ENCODE measurements at regions of chr6 and their contacts with region 1.

Region 1: GRCh38 chr6:117674991-117675657 is at the start of gene NUS1:
- DNase-seq: peak; percentile 98
- ATAC-seq: peak; percentile 96
- H3K4me3 Mint-ChIP-seq: peak within 1 kb of the TSS; percentile 80
- H3K27ac Mint-ChIP-seq: peak within 1 kb of the TSS; percentile 92
- H3K4me1 Mint-ChIP-seq: peaks cover 46% of the 10 kb centered on the region
- H3K27me3 Mint-ChIP-seq: no peaks in the 10 kb centered on the region
- total RNA-seq, gene NUS1: 34.0 to 38.3 TPM

Region 2: DNA sequence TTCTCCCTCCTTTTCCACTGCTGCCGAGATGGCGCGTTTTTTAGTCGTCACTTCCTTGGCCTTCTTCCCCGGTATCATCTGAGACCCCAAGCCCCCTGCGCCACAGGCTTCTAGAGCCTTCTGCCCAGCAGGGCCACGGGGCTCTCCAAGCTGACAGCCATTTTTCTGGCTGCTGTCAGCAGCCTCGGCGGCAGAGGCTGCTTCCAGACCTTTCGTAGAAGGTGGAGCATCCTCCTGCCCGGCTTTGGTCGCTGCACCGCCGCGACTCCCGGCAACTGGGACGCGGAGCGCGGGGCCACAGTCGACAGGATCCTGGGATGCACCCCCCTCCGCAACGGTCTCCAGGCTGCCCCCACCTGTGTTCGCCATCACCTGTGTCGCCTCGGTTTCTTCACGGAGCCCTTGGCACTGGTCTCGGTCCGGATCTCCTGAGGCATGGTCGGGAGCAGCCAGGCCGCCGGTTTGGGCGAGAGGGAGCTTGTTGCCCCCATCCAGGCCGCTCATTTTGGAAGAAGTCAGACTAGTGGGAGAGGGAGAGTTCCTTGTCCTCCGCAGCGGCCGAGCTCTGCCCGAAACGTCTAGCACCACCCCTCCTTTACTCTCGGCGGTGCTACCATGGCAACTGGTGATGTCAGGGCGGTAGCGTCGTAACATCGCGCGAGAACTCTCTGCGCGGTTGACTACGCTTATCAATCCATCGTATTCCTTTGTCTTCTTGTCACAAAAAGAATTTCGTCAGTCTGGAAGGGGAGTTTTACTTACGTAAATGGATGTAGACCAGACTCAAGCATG is 1421.4 kb before region 1 on chr6 and contains the start of gene TSPYL4:
- CTCF ChIA-PET with region 1: no interaction called
- POLR2A ChIA-PET with region 1: no interaction called
- intact Hi-C with region 1: loop called in 1 of 2 experiments (anchors 10 kb)
- DNase-seq: peak; percentile 95
- ATAC-seq: peak; percentile 99
- H3K4me3 Mint-ChIP-seq: no peak within 1 kb of the TSS
- H3K27ac Mint-ChIP-seq: no peak within 1 kb of the TSS
- H3K4me1 Mint-ChIP-seq: peaks cover 19% of the 10 kb centered on the region
- H3K27me3 Mint-ChIP-seq: no peaks in the 10 kb centered on the region
- total RNA-seq, gene TSPYL4: 9.4 to 10.8 TPM

Region 3: GRCh38 chr6:116925088-116925794 is 749.9 kb before region 1 on chr6:
- CTCF ChIA-PET with region 1: no interaction called
- POLR2A ChIA-PET with region 1: no interaction called
- intact Hi-C with region 1: no loop called
- DNase-seq: no peak
- ATAC-seq: no peak
- H3K4me3 Mint-ChIP-seq: no peak overlapping the region
- H3K27ac Mint-ChIP-seq: no peak overlapping the region
- H3K4me1 Mint-ChIP-seq: no peaks in the 10 kb centered on the region
- H3K27me3 Mint-ChIP-seq: no peaks in the 10 kb centered on the region

Region 4: GRCh38 chr6:117547688-117548621 is 127.2 kb before region 1 on chr6:
- CTCF ChIA-PET with region 1: interaction called, 3 read pairs
- POLR2A ChIA-PET with region 1: no interaction called
- intact Hi-C with region 1: loop called in 1 of 2 experiments (anchors 5 kb)
- DNase-seq: peak; percentile 60
- ATAC-seq: peak; percentile 42
- H3K4me3 Mint-ChIP-seq: peak overlapping the region; percentile 67
- H3K27ac Mint-ChIP-seq: peak overlapping the region; percentile 62
- H3K4me1 Mint-ChIP-seq: peaks cover 39% of the 10 kb centered on the region
- H3K27me3 Mint-ChIP-seq: peaks cover 11% of the 10 kb centered on the region

Region 5: DNA sequence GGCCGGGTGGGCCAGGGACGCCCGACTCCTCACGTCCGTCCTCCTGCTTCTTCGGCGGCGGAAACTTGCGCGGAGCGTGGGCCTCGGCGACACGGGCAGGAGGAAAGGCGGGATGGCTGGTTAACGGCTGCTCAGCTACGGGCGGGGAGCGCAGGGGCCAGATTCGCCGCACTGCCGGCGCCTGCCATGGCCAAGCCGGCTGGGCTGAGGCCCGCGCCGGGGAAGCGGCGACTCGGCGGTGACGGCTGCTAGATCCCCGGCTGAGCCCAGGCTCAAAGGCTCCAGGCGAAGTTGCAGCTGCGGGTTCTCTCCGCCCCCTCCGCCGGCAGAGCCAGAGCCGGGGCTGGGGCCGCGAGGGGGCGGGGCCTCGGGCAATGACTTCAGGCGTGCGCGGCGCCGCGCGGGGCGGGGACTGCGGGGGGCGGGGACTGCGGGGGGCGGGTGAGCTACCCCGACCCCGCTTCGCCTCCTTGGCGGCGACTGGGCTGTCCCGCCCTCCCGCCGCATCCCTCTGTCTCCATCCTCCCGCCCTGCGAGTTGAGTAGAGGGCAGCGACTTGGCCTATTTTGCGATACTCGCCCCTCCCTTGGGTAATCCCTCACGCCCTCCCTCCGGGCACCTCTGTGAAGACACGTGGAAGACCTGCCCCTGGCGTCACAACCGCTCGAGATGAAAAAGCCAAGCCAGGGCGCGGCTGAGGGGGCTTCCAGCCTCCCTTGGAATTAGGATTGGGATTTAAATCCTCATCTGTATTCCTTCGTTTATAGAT is 976.3 kb after region 1 on chr6 and contains the start of gene CEP85L:
- CTCF ChIA-PET with region 1: no interaction called
- POLR2A ChIA-PET with region 1: no interaction called
- intact Hi-C with region 1: loop called in 1 of 2 experiments (anchors 2 kb)
- DNase-seq: peak; percentile 96
- ATAC-seq: peak; percentile 93
- H3K4me3 Mint-ChIP-seq: peak within 1 kb of the TSS; percentile 85
- H3K27ac Mint-ChIP-seq: peak within 1 kb of the TSS; percentile 94
- H3K4me1 Mint-ChIP-seq: peaks cover 50% of the 10 kb centered on the region
- H3K27me3 Mint-ChIP-seq: no peaks in the 10 kb centered on the region
- total RNA-seq, gene CEP85L: 29.5 to 29.7 TPM

Region 6: DNA sequence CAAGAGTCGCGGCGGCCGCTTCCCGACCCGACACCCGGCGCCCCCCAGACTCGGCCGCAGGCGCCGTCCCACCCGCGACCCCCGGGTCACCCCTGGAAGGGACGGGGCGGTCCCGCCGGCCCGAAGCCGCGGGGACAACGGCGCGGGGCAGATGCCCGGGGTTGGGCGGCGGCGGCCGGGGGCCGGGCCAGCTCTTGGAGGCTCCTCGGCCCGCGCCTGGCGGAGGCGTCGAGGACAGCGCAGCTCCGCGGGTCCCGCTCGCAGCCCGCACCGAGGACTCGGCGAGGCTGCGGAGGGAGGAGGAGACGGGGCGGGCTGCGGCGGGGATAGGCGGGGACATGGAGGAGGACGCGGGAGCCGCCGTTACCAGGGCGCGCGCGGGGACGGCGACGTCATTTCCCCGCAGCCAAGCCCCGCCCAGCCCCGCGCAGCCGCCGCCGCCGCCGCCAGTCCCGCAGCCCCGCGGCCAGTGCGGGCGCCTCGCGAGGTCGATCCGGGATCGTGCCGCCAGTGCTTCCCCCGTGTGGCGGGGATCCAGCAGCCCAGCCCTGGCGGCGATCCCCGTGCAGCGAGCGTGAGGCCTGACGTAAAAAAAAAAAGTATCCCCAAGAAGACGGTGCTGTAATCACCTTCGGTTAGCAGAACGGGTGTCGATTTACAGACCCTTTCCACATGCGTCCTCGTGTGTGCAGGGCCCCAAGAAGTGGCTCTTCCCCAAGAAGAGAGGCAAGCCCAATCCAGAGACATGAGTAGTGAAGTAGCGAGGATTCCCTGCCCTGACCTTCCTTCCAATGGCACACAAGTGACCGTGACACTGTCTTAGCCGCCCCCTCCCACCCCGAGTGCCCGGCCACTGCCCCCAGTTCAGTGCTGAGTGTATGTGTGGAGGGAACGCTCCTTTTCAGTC is 1403.5 kb after region 1 on chr6 and contains the start of gene FAM184A:
- CTCF ChIA-PET with region 1: no interaction called
- POLR2A ChIA-PET with region 1: no interaction called
- intact Hi-C with region 1: loop called in 1 of 2 experiments (anchors 10 kb)
- DNase-seq: peak; percentile 82
- ATAC-seq: peak; percentile 37
- H3K4me3 Mint-ChIP-seq: peak within 1 kb of the TSS; percentile 77
- H3K27ac Mint-ChIP-seq: peak within 1 kb of the TSS; percentile 94
- H3K4me1 Mint-ChIP-seq: peaks cover 46% of the 10 kb centered on the region
- H3K27me3 Mint-ChIP-seq: no peaks in the 10 kb centered on the region
- total RNA-seq, gene FAM184A: 13.8 to 14.5 TPM